Activated CD8-positive, alpha-beta T cell treated with anti-CD3 and anti-CD28 coated beads for 36 hours (primary cell): ENCODE measurements at regions of chr10 and their contacts with region 1.

Region 1: GRCh38 chr10:102904346-102904745 is 13.7 kb upstream of the CNNM2 start:
- DNase-seq: no peak
- ATAC-seq: no peak
- H3K4me3 Mint-ChIP-seq: no peak overlapping the region
- H3K27ac Mint-ChIP-seq: no peak overlapping the region
- H3K4me1 Mint-ChIP-seq: no peaks in the 10 kb centered on the region
- H3K27me3 Mint-ChIP-seq: no peaks in the 10 kb centered on the region
- CTCF ChIP-seq: no peak

Region 2: DNA sequence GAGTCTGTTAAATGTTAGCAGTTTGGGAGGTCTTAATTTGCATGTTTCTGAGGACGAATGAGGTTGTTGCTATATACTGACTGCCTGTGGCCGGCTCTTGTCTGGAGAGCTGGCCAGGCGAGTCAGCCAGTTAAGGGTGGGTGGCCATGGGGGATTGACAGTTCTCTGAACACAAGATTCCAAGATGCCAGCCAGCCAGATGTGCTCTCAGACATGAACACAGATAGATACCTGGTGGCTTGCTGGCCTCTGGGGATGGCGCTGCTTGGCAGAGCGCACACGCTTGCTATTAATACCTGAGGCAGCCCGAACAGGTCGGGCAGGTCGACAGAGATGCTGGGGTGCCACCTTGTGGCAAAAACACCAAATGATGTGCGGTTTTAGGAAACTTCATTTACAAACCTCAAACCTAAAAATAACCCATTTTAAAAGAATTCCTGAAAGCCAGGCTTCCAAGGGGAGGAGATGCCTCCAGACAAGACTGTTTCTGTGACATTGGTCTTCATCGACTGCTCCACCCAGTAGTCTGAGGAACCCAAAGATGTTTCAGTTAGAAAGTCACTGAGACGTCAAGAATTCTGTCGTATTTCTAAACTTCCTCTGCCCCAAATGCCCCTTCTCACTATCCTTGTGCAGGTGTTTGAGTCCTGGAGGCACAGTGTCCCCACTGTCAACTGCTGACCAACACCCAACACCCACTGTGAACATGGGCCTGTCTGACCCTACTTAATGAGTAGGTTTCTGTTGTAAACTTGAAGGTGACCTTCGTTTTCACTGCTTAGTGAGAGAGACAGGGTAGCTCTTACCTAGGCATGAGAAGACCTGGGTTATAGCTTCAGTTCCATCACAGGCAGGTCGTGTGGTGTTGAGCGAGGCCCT is 165.3 kb after region 1 on chr10:
- CTCF ChIA-PET with region 1: interaction called, 12 read pairs
- POLR2A ChIA-PET with region 1: no interaction called
- intact Hi-C with region 1: no loop called
- DNase-seq: peak; percentile 84
- ATAC-seq: peak; percentile 76
- H3K4me3 Mint-ChIP-seq: no peak overlapping the region
- H3K27ac Mint-ChIP-seq: peak overlapping the region; percentile 29
- H3K4me1 Mint-ChIP-seq: peaks cover 23% of the 10 kb centered on the region
- H3K27me3 Mint-ChIP-seq: no peaks in the 10 kb centered on the region
- CTCF ChIP-seq: peak; percentile 74